Heart right ventricle (tissue), 16 donors: ENCODE measurements at regions of chr3 and their contacts with region 1.

Region 1: GRCh38 chr3:148861277-148861869 is 3.7 kb upstream of the CPA3 start:
- DNase-seq: no peak
- ATAC-seq: peak in 1 of 8 donors; percentile 51
- H3K4me3 ChIP-seq: no peak overlapping the region
- H3K27ac ChIP-seq: no peak overlapping the region
- H3K4me1 ChIP-seq: no peaks in the 10 kb centered on the region
- H3K27me3 ChIP-seq: peaks cover 0 to 16% (median 7%) of the 10 kb centered on the region in 7 donors
- CTCF ChIP-seq: peak; percentile 58 to 85 (median 80)

Region 2: DNA sequence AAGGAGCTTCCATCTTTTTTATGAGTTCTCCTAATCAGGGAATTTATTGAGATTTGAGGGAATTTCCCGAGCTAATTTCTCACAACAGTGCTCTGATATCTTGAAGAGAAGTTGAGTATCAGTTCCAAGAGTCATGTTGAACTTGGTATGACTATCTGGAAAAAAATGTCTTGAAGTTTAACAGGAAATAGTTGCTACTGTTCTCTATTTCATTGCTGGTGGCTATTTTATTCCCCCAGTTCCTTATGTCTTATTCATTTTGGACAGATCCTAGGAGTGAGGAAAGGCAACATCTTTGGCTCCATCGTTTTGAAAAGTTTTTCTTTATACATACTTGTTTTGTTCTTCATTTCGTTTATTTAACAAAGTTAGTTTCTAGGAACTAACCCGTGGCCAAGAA is 471.5 kb before region 1 on chr3:
- intact Hi-C with region 1: no loop called
- DNase-seq: no peak
- ATAC-seq: no peak
- H3K4me3 ChIP-seq: no peak overlapping the region
- H3K27ac ChIP-seq: no peak overlapping the region
- H3K4me1 ChIP-seq: no peaks in the 10 kb centered on the region
- H3K27me3 ChIP-seq: no peaks in the 10 kb centered on the region
- CTCF ChIP-seq: no peak

Region 3: DNA sequence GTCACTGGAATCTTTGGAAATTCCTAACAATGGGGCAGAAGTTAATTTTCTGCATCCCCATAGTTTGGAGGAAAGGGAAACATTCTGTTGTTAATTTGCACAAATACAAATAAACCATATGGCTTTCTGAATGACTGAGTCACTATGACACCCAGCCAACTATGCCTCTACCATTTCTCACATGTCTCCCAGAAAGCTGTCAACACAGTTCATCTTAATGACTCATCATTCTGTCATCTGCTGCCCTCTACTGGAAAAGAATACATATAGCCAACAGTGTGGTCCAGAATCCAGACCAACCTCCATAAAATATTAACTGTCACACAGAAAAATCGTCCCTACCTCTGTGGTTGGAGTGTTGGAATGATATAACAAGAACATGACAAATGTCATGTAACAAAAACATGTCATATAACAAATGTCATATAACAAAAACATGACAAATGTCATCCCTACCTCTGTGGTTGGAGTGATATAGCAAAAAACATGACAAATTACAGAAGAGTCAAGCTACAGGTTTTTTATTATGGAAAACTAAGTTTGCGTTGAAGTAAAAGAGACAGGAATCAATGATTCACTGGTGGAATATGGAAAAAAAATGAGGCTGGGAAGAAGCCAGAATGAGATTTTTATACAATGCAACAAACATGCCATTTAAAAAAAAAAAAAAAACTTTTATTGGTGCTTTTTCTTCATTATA is 82.3 kb after region 1 on chr3:
- intact Hi-C with region 1: loop called (anchors 1 to 10 kb)
- DNase-seq: peak in 1 of 2 donors; percentile 29
- ATAC-seq: peak; percentile 74 to 93 (median 82)
- H3K4me3 ChIP-seq: no peak overlapping the region
- H3K27ac ChIP-seq: no peak overlapping the region
- H3K4me1 ChIP-seq: peaks cover 0 to 3% (median 0%) of the 10 kb centered on the region in 9 donors
- H3K27me3 ChIP-seq: no peaks in the 10 kb centered on the region
- CTCF ChIP-seq: peak; percentile 37 to 77 (median 72)

Region 4: DNA sequence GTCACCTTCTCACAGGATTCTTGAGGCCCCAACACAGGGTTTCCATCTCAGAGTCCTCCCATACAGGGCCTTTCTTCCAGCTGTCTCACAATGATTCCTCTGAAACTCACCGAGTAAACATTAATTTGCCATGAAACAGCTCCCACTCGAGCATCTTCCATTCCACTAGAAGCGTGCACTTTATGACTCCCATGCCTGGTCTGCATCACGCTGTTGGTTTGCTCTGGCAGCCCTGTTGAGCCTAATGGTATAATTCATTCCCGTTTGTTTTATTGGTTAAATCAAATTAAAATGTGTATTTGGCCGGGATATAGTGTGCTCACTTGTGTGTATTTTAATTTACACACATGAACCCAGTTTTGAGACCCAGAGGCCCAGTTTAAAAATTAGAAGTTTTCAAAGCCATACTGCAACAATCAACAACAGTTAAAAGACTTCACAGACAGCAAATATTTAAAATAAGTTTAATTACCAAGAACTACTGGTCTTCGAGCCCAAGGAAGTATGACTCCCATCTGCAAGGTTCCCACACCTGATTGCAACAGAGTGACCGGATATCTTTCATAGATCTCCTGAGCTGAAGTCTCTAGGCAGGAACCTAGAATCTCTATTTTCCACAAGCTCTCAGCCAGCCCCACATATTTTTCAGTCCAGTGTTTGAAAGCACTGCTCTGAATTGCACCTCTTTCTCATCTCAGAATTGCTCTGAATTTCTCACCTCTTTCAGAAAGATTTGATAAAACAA is 87.7 kb after region 1 on chr3:
- intact Hi-C with region 1: loop called (anchors 1 to 10 kb)
- DNase-seq: no peak
- ATAC-seq: no peak
- H3K4me3 ChIP-seq: no peak overlapping the region
- H3K27ac ChIP-seq: no peak overlapping the region
- H3K4me1 ChIP-seq: no peaks in the 10 kb centered on the region
- H3K27me3 ChIP-seq: no peaks in the 10 kb centered on the region
- CTCF ChIP-seq: no peak

Region 5: DNA sequence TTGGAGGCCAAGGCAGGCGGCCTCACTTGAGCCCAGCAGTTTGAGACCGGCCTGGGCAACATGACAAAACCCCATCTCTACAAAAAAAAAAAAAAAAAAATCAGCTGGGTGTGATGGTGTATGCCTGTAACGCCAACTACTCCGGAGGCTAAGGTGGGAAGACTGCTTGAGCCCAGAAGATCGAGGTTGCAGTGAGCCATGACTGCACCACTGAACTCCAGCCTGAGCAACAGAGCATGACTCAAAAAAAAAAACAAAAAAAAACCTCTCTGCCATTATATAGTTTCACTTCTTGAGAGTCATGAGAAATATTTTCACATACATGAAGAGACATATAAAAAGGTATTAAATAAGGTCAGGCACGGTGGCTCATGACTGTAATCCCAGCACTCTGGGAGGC is 406.2 kb after region 1 on chr3:
- intact Hi-C with region 1: loop called in 5 of 10 experiments (anchors 5 to 10 kb)
- DNase-seq: no peak
- ATAC-seq: no peak
- H3K4me3 ChIP-seq: no peak overlapping the region
- H3K27ac ChIP-seq: no peak overlapping the region
- H3K4me1 ChIP-seq: peaks cover 0 to 1% (median 0%) of the 10 kb centered on the region in 9 donors
- H3K27me3 ChIP-seq: no peaks in the 10 kb centered on the region
- CTCF ChIP-seq: no peak